ENCODE measurements at regions of chr14 and their contacts with region 1.

Region 1: GRCh38 chr14:39097159-39097558 is 5.9 kb downstream of the SEC23A start:
- DNase-seq: peak; percentile 81
- H3K4me3 ChIP-seq: no peak overlapping the region
- H3K27ac ChIP-seq: peak overlapping the region; percentile 39
- H3K4me1 ChIP-seq: peaks cover 12% of the 10 kb centered on the region
- H3K27me3 ChIP-seq: no peaks in the 10 kb centered on the region
- CTCF ChIP-seq: no peak

Region 2: DNA sequence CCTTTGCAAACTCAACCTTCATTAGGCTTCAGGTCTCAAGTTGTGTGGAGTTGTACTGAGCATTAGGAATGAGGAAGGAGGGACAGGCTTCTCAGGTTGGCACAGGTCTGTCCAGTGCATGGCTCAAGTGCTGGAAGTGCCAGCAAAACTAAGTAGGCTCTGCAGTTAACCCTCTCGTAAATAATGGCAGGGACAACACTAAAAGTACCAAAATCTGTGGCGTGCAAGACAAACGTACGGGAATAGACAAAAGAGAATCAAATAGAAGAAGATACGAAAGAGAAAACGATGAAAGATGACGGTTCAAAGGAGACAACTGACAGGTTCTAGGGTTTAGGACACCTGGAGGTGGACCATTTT is 72.4 kb after region 1 on chr14:
- CTCF ChIA-PET with region 1: no interaction called
- dilution Hi-C with region 1: loop called (anchors 10 kb)
- in situ Hi-C with region 1: no loop called
- intact Hi-C with region 1: no loop called
- DNase-seq: peak; percentile 39
- H3K4me3 ChIP-seq: peak overlapping the region; percentile 71 to 81 (median 74)
- H3K27ac ChIP-seq: peak overlapping the region; percentile 87
- H3K4me1 ChIP-seq: peaks cover 16% of the 10 kb centered on the region
- H3K27me3 ChIP-seq: no peaks in the 10 kb centered on the region
- CTCF ChIP-seq: no peak

Region 3: GRCh38 chr14:39203659-39204606 is 106.8 kb after region 1 on chr14:
- CTCF ChIA-PET with region 1: no interaction called
- dilution Hi-C with region 1: no loop called
- in situ Hi-C with region 1: no loop called
- intact Hi-C with region 1: no loop called
- DNase-seq: peak; percentile 78
- H3K4me3 ChIP-seq: no peak overlapping the region
- H3K27ac ChIP-seq: no peak overlapping the region
- H3K4me1 ChIP-seq: peaks cover 15% of the 10 kb centered on the region
- H3K27me3 ChIP-seq: no peaks in the 10 kb centered on the region
- CTCF ChIP-seq: no peak

Measured in mammary epithelial cell (primary cell).